Dorsolateral prefrontal cortex (tissue), 120 donors: ENCODE measurements at regions of chr7 and their contacts with region 1.

Region 1: GRCh38 chr7:99143853-99144672 is at the start of gene SMURF1:
- DNase-seq: peak; percentile 29 to 73 (median 62)
- H3K4me3 ChIP-seq: peak within 1 kb of the TSS; percentile 71 to 99 (median 91)
- H3K27ac ChIP-seq: peak within 1 kb of the TSS; percentile 43 to 98 (median 92)
- H3K27me3 ChIP-seq: no peaks in the 10 kb centered on the region
- CTCF ChIP-seq: peak in 37 of 56 donors; percentile 8 to 55 (median 30)
- total RNA-seq, gene SMURF1: 23.6 to 40.5 (median 32.4) TPM

Region 2: DNA sequence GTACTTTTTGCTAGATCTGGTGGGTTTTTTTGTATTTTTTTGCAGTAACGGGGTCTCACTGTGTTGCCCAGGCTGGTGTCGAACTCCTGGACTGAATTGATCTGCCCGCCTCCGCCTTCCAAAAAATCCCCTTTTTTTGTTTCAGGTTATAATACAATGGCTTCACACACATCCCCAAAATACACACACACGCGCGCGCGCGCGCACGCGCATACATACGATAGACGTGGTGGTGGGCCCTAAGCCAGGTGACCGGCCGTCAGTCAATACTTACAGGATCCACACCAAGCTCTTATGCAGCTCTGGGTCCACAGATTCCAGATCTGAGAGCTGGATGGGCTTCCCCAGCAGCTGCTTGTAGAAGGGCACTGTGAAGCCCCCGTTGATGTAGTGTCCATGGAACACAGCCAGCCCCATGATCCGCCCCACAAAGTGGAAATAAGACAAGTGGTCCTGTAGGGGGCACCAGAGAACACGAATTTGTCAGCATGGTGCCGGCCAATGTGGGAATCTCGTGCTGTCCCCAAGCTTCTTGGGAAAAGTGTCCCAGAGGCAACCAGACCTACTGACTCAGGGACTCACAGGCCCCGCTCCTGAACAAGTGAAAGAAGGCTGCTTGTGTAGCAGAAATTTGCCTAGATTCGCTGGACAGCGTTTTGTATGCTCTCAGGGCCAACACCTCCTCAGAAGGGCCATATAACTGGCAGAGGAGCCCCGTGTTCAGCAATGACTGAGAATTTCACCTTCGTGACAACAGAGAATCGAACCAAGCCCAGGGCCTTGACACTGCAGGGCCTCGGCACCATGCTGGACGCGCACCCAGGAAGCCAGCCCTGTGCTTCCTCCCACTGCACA is 103.7 kb before region 1 on chr7:
- intact Hi-C with region 1: loop called (anchors 2 to 5 kb)
- DNase-seq: peak; percentile 63 to 89 (median 84)
- H3K4me3 ChIP-seq: no peak overlapping the region
- H3K27ac ChIP-seq: peak overlapping the region in 51 of 59 donors; percentile 2 to 83 (median 63)
- H3K27me3 ChIP-seq: no peaks in the 10 kb centered on the region
- CTCF ChIP-seq: peak; percentile 68 to 93 (median 87)

Region 3: DNA sequence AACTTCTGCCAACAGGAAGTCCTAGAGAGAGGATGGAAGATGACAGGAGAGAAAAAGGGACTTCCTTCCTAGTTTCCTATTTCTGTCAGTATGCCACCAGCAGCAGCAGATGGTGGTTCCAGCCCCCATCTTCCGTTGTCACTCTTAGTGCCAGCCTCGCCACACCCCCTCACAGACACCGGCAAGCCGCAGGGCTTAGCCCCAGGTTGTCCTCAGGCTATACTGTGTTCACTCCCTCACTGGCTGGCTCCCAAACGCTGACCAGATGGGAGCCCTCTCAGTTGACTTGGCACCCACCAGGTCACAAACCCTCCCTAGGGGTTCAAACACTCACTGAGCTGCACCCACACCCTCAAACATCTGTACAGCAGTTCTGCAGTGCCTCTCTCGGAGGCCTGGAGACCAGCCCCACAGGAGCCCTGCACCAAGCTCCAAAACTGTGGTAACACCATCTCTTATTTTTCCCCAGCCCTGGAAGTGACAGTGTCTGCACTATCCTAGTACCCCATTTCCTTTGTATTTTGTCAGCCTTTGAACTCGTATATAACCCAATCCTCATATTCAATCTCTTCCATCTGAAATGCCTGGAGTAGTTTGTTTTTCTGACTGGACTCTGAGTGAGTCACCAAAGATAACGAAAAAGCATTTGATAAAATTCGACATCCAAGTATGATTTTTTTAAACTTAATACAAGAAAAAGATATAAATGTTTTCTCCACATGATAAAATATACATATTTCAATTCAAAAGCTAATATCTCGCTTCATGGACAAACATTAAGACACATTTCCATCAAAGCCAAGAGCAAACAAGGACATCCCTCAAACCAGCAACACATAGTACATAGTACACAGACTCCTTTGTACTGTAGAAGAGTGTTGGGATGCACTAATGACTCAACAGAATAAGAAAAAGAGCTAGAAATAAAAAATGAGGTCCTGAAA is 34.7 kb before region 1 on chr7:
- intact Hi-C with region 1: loop called in 1 of 2 experiments (anchors 5 kb)
- DNase-seq: peak in 7 of 10 donors; percentile 25 to 62 (median 43)
- H3K4me3 ChIP-seq: peak overlapping the region in 11 of 59 donors; percentile 6 to 35 (median 13)
- H3K27ac ChIP-seq: peak overlapping the region; percentile 44 to 97 (median 92)
- H3K27me3 ChIP-seq: no peaks in the 10 kb centered on the region
- CTCF ChIP-seq: no peak

Region 4: GRCh38 chr7:99312316-99313203 is 168.5 kb after region 1 on chr7:
- intact Hi-C with region 1: loop called in 1 of 2 experiments (anchors 5 kb)
- DNase-seq: peak in 9 of 10 donors; percentile 27 to 84 (median 63)
- H3K4me3 ChIP-seq: peak overlapping the region in 4 of 59 donors; percentile 2 to 18 (median 10)
- H3K27ac ChIP-seq: no peak overlapping the region
- H3K27me3 ChIP-seq: no peaks in the 10 kb centered on the region
- CTCF ChIP-seq: peak; percentile 80 to 98 (median 93)

Region 5: GRCh38 chr7:99325545-99326407 is 181.7 kb after region 1 on chr7 and contains the start of gene ARPC1A:
- intact Hi-C with region 1: loop called (anchors 5 kb)
- DNase-seq: peak; percentile 60 to 91 (median 76)
- H3K4me3 ChIP-seq: peak within 1 kb of the TSS; percentile 61 to 100 (median 98)
- H3K27ac ChIP-seq: peak within 1 kb of the TSS in 57 of 59 donors; percentile 29 to 96 (median 83)
- H3K27me3 ChIP-seq: no peaks in the 10 kb centered on the region
- CTCF ChIP-seq: peak in 34 of 56 donors; percentile 3 to 63 (median 30)
- total RNA-seq, gene ARPC1A: 84.1 to 180 (median 126) TPM